CD4-positive, alpha-beta memory T cell (primary cell): ENCODE measurements at regions of chr1 and their contacts with region 1.

Region 1: DNA sequence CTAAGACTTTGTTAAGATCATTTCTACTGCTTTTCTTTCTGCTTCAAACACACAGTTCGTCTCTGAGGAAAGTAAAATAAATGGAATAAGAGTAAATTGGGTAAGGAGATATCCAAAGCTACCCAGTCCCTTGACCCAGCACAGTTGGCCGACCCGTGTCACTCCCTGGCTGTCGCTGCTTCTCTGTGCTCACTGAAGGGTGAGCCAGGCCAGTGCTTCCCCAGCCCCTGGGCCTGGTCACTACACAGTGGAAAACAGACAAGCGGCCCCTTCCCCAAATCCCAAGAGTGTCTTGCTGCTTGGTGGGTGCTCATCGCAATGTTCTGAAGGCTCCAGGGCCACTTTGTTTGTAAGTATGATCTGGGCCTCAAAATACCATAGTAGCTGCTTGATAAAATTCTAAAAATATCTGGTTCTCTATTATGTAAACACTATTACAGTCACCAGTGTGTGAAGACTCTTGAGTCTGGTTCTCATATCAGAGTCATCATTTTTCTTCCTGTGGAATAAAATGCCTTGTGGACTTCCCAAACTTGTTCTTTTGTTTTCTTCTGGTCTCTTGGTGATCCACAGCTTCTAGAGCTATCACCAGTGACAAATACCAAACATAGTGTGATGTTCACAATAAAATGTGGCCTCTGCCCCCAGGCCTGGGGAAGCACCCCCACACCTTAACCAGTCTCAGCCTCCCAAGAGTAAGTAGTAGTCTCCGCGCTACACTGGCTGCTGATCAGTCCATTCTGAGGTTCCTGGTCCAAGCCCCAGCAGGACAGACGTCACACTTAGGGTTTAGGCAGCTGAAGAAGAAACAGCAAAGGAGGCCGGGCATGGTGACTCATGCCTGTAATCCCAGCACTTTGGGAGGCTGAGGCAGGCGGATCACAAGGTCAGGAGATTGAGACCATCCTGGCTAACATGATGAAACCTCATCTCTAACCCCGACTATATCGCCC is 106.2 kb downstream of the DHRS3 start:
- DNase-seq: no peak
- H3K4me3 ChIP-seq: peak overlapping the region; percentile 12 to 25
- H3K4me3 Mint-ChIP-seq: peak overlapping the region; percentile 83 to 95 (median 88)
- H3K27ac ChIP-seq: peak overlapping the region; percentile 45
- H3K27ac Mint-ChIP-seq: peak overlapping the region; percentile 22 to 96 (median 88)
- H3K4me1 ChIP-seq: peaks cover 28% of the 10 kb centered on the region
- H3K4me1 Mint-ChIP-seq: peaks cover 30 to 62% (median 49%) of the 10 kb centered on the region in 4 donors
- H3K27me3 ChIP-seq: no peaks in the 10 kb centered on the region
- H3K27me3 Mint-ChIP-seq: no peaks in the 10 kb centered on the region

Region 2: GRCh38 chr1:10694633-10695627 is 1816.9 kb before region 1 on chr1:
- CTCF ChIA-PET with region 1: no interaction called
- POLR2A ChIA-PET with region 1: no interaction called
- intact Hi-C with region 1: no loop called
- DNase-seq: peak; percentile 74 to 86 (median 81)
- H3K4me3 ChIP-seq: peak overlapping the region in 1 of 2 donors; percentile 41
- H3K4me3 Mint-ChIP-seq: peak overlapping the region; percentile 76 to 92 (median 84)
- H3K27ac ChIP-seq: peak overlapping the region; percentile 22
- H3K27ac Mint-ChIP-seq: peak overlapping the region in 6 of 7 donors; percentile 62 to 96 (median 84)
- H3K4me1 ChIP-seq: peaks cover 21% of the 10 kb centered on the region
- H3K4me1 Mint-ChIP-seq: peaks cover 10 to 33% (median 17%) of the 10 kb centered on the region in 4 donors
- H3K27me3 ChIP-seq: no peaks in the 10 kb centered on the region
- H3K27me3 Mint-ChIP-seq: peaks cover 0 to 1% of the 10 kb centered on the region in 2 donors

Region 3: DNA sequence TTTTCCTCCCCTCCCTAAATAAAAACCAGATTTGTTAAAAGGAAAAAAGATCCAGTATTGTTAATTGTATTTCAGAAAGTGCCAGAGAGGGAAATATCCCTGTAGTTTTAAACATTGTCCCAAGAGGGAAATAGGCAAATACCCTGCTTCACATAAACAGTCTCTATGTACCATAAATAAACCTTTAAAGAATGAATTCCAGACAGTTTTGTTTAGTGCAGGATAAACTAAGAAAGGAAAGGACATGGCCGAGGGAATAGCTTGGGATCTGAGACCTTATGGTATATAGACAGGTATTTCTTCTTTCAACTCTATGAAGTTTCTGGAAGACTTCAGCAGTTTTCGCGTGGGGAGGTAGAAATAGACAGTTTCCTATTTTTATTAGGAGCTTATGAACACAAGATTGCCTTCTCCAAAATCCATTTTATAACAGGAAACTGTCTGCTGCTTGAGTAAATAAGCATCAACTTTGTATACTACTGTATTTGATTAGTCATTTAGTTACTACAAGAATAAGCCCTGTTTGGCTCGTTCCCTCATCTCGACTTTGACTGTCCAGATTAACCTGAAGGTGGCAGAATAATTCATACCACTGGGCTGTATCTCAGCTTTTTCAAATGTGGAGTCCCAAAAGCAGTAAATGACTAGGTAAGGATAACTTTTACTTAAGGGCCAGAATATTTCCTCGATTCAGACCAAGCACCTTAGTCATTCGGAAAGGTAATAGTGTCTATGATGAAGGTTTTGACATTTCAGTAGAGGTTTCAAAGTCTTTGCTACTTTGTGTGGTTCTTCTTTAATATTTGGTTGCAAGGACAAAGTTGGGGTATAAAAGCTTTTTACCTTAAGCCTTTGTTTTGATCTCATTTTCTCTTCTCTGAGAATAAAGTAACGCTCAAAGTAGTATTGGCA is 104.5 kb before region 1 on chr1:
- CTCF ChIA-PET with region 1: interaction called, 6 read pairs
- POLR2A ChIA-PET with region 1: interaction called, 5 read pairs
- intact Hi-C with region 1: loop called (anchors 5 kb)
- DNase-seq: peak in 3 of 5 donors; percentile 25 to 31 (median 27)
- H3K4me3 ChIP-seq: no peak overlapping the region
- H3K4me3 Mint-ChIP-seq: no peak overlapping the region
- H3K27ac ChIP-seq: no peak overlapping the region
- H3K27ac Mint-ChIP-seq: peak overlapping the region in 2 of 7 donors; percentile 58 to 72
- H3K4me1 ChIP-seq: no peaks in the 10 kb centered on the region
- H3K4me1 Mint-ChIP-seq: peaks cover 0 to 10% (median 8%) of the 10 kb centered on the region in 4 donors
- H3K27me3 ChIP-seq: no peaks in the 10 kb centered on the region
- H3K27me3 Mint-ChIP-seq: no peaks in the 10 kb centered on the region

Region 4: GRCh38 chr1:12448746-12449177 is 63.0 kb before region 1 on chr1:
- CTCF ChIA-PET with region 1: interaction called, 5 read pairs
- POLR2A ChIA-PET with region 1: interaction called, 21 read pairs
- intact Hi-C with region 1: no loop called
- DNase-seq: no peak
- H3K4me3 ChIP-seq: peak overlapping the region in 1 of 2 donors; percentile 13
- H3K4me3 Mint-ChIP-seq: peak overlapping the region in 7 of 8 donors; percentile 67 to 92 (median 84)
- H3K27ac ChIP-seq: no peak overlapping the region
- H3K27ac Mint-ChIP-seq: peak overlapping the region in 6 of 7 donors; percentile 90 to 98 (median 92)
- H3K4me1 ChIP-seq: peaks cover 67% of the 10 kb centered on the region
- H3K4me1 Mint-ChIP-seq: peaks cover 50 to 84% (median 61%) of the 10 kb centered on the region in 4 donors
- H3K27me3 ChIP-seq: no peaks in the 10 kb centered on the region
- H3K27me3 Mint-ChIP-seq: no peaks in the 10 kb centered on the region

Region 5: DNA sequence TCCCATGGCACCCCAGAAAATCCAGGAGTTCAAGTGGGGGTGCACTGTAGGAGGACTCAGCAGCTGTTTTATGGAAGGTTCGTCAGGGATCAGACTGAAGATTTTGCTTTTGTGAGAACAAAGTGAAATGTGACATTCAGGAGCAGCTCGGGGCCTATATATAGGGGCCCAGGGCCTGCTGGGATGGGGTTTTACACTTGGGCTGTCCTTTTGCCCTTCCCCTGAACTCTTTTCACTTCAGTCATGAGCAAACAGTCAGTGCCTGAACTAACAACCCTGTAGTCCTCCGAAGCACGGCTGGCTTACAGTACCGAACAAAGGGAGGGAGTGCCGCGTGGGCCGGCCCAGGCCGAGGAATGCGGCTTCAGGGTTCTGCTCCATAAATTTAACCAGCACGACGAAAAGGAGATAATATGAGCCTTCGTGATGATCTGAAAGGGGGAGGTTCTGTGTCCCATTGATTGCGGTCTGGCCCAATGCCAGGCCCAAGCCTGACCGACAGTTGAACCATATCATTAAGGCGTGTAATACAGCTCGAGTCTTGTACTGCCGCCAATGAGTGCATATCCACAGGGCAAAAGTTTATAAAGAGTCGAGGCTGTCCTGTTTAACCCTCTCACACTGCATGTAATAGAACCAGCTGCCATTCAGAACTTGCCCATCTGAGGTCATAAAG is 33.7 kb before region 1 on chr1:
- CTCF ChIA-PET with region 1: interaction called, 4 read pairs
- POLR2A ChIA-PET with region 1: interaction called, 60 read pairs
- intact Hi-C with region 1: loop called (anchors 2 kb)
- DNase-seq: peak in 3 of 5 donors; percentile 9 to 53 (median 22)
- H3K4me3 ChIP-seq: peak overlapping the region in 1 of 2 donors; percentile 9
- H3K4me3 Mint-ChIP-seq: peak overlapping the region in 7 of 8 donors; percentile 59 to 84 (median 78)
- H3K27ac ChIP-seq: peak overlapping the region; percentile 38
- H3K27ac Mint-ChIP-seq: peak overlapping the region; percentile 89 to 94 (median 92)
- H3K4me1 ChIP-seq: peaks cover 93% of the 10 kb centered on the region
- H3K4me1 Mint-ChIP-seq: peaks cover 69 to 92% (median 81%) of the 10 kb centered on the region in 4 donors
- H3K27me3 ChIP-seq: no peaks in the 10 kb centered on the region
- H3K27me3 Mint-ChIP-seq: no peaks in the 10 kb centered on the region